ENCODE measurements at regions of chr11 and their contacts with region 1.

Region 1: DNA sequence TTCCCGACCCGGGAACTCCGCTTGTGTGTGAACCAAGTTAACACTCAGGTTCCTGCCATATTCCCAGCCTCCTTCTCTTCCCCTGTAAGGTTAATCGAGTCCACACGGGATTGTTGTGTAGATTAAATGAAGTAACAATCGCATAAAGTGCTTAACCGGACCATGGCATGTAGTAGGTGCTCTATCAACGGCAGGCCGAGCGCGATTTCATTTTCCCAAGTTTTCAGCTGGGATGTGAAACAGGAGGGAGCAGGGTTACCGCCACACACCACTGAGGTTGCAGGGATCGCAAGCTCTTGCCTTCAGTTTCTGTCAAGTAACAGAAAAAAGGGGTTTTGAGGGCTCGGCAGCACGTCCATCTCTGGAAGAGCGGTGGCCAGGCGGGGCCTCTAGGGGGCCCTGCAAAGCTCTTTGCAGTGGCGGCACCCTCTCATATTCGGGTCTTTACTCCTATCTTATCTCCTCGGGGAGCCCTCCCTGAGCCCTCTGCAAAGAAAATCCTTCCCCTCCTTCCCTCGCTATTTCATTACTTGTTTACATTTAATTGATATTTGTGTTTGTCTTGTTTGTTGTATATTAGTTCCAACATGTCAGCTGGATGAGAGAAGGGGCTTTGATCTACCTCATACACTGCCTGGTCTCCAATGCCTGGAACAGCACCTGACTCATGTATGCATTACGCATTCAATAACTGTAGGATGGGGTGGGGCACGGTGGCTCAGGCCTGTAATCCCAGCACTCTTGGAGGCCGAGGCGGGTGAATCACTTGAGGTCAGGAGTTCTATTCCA is 818 bp upstream of the PLEKHA7 start:
- DNase-seq: no peak
- H3K4me3 ChIP-seq: peak overlapping the region; percentile 68 to 92
- H3K27ac ChIP-seq: no peak overlapping the region
- H3K4me1 ChIP-seq: peaks cover 0 to 11% (median 2%) of the 10 kb centered on the region in 4 donors
- H3K27me3 ChIP-seq: no peaks in the 10 kb centered on the region
- CTCF ChIP-seq: peak; percentile 10 to 13

Region 2: DNA sequence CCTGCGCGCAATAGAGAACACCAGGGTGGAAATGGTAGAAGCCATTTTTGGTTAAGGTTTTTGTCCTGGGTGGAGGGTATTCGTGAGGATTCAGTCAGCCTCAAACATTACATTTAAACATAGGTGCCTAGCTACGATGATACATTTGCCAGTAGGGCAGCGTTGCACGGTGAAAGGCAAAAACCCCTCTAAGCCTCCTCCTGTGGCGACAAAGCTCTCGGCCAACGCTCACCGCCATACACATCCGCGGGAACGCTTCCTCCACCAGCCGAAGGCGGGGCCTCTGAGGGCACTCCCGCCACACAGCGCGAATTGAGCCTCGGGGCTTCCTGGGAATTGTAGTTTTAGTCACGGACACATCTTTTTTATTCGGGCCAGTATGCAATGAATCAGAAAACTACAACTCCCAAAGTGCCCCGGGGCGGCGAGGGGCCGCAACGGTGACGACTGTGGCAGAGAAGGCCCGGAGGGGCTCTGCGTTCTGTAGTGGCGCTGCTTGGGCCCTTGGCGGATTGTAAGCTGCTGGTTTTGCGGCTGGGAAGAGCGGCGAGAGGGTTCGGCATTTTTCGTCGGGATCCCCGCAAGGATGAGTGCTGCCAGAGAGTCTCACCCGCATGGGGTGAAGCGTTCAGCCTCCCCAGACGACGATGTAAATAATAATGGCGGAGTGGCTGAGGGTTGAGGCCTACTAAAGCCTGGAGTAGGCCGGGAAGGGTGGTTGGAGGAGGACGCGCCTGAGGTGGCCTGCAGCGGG is 276.7 kb before region 1 on chr11 and contains the start of gene C11orf58:
- intact Hi-C with region 1: no loop called
- DNase-seq: peak; percentile 98
- H3K4me3 ChIP-seq: peak within 1 kb of the TSS; percentile 63 to 65
- H3K27ac ChIP-seq: peak within 1 kb of the TSS; percentile 94
- H3K4me1 ChIP-seq: peaks cover 0 to 44% (median 33%) of the 10 kb centered on the region in 4 donors
- H3K27me3 ChIP-seq: no peaks in the 10 kb centered on the region
- CTCF ChIP-seq: peak in 1 of 2 experiments; percentile 15

Region 3: GRCh38 chr11:17077520-17078401 is 62.7 kb after region 1 on chr11 and contains the start of gene RPS13:
- intact Hi-C with region 1: loop called (anchors 10 kb)
- DNase-seq: peak; percentile 96 to 99
- H3K4me3 ChIP-seq: peak within 1 kb of the TSS; percentile 88 to 99
- H3K27ac ChIP-seq: peak within 1 kb of the TSS; percentile 91 to 96
- H3K4me1 ChIP-seq: peaks cover 0 to 33% (median 24%) of the 10 kb centered on the region in 4 donors
- H3K27me3 ChIP-seq: no peaks in the 10 kb centered on the region
- CTCF ChIP-seq: no peak

Region 4: DNA sequence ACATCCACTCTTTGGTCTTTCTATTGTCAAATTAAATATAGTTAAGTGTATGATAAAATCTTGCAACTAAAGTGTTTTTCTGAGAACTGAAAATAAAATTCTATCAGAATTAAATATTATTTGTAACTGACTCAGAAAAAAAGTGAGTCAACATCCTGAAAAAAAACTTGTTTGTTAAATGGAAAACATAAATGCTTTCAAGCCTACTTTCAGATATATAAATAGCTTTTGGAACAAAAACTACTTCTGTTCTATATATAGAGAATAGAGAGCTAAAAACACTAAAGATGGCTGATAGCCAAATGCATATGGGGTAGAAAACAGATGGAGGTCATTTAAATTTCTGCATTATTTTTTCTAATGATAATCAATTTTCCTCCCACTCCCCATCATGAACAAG is 130.9 kb after region 1 on chr11:
- intact Hi-C with region 1: no loop called
- DNase-seq: no peak
- H3K4me3 ChIP-seq: no peak overlapping the region
- H3K27ac ChIP-seq: no peak overlapping the region
- H3K4me1 ChIP-seq: peaks cover 0 to 6% (median 3%) of the 10 kb centered on the region in 4 donors
- H3K27me3 ChIP-seq: no peaks in the 10 kb centered on the region
- CTCF ChIP-seq: no peak